Caco-2 (cell line): ENCODE measurements at regions of chr13 and their contacts with region 1.

Region 1: GRCh38 chr13:40922437-40923040 is 96.6 kb downstream of the ELF1 start:
- DNase-seq: peak; percentile 80 to 87
- H3K4me3 ChIP-seq: peak overlapping the region; percentile 76
- H3K4me3 Mint-ChIP-seq: peak overlapping the region; percentile 99
- H3K27ac Mint-ChIP-seq: peak overlapping the region; percentile 95
- H3K4me1 ChIP-seq: peaks cover 9% of the 10 kb centered on the region; the same call in 1 of the 2 replicates
- H3K4me1 Mint-ChIP-seq: peaks cover 15% of the 10 kb centered on the region
- H3K27me3 ChIP-seq: no peaks in the 10 kb centered on the region
- H3K27me3 Mint-ChIP-seq: no peaks in the 10 kb centered on the region
- CTCF ChIP-seq: no peak

Region 2: DNA sequence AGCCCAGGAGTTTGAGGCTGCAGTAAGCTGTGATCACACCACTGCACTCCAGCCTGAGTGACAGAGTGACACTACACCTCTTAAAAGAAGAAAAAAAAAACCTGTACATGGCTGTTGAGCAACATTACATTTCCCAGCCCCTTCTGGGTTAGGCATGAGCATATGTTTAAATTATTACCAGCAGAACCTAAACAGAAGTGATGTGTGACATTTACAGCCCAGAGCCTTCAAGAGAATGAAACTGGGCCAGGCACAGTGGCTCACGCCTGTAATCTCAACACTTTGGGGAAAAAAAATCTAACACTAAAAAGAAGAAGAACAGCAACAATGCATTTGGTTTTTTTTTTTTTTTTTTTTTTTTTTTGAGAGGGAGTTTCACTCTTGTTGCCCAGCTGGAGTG is 189.9 kb before region 1 on chr13:
- CTCF ChIA-PET with region 1: no interaction called
- POLR2A ChIA-PET with region 1: no interaction called
- intact Hi-C with region 1: no loop called
- DNase-seq: no peak
- H3K4me3 ChIP-seq: no peak overlapping the region
- H3K4me3 Mint-ChIP-seq: no peak overlapping the region
- H3K27ac Mint-ChIP-seq: no peak overlapping the region
- H3K4me1 ChIP-seq: no peaks in the 10 kb centered on the region
- H3K4me1 Mint-ChIP-seq: no peaks in the 10 kb centered on the region
- H3K27me3 ChIP-seq: no peaks in the 10 kb centered on the region
- H3K27me3 Mint-ChIP-seq: no peaks in the 10 kb centered on the region
- CTCF ChIP-seq: no peak

Region 3: DNA sequence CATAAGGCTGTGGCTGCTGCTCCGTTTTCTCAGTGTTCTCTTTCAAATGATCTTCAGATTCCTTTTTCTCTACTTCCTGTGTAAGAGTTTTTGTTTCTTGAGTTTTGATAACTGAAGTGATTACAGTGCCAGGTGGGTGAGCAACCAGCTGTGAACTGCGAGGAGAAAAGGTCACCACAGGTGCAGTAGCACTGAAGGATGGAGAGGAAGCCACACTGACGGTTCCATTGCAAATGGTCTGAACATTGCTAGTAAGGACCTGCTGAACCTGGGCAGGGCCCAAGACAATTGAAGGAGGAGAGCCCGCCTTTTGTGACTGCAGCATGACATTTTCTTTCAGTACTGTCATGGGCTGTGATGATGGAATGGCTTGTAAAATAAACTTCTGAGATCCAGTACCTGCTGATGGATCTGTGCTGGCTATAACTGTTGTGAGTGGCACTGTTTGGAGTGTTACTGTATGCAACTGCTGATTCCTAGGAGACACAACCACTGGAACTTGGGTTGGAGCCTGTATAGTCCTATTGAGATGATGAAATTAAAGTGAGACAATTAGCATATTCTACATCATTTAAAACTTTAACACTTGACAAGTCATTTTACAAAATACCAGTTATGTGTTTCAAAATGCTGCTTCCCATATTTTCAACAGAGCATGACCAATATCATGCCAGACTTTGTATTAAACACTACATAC is 11.1 kb after region 1 on chr13:
- CTCF ChIA-PET with region 1: interaction called, 4 read pairs
- POLR2A ChIA-PET with region 1: interaction called, 11 read pairs
- intact Hi-C with region 1: no loop called
- DNase-seq: no peak
- H3K4me3 ChIP-seq: no peak overlapping the region
- H3K4me3 Mint-ChIP-seq: no peak overlapping the region
- H3K27ac Mint-ChIP-seq: no peak overlapping the region
- H3K4me1 ChIP-seq: no peaks in the 10 kb centered on the region
- H3K4me1 Mint-ChIP-seq: no peaks in the 10 kb centered on the region
- H3K27me3 ChIP-seq: no peaks in the 10 kb centered on the region
- H3K27me3 Mint-ChIP-seq: no peaks in the 10 kb centered on the region
- CTCF ChIP-seq: no peak

Region 4: GRCh38 chr13:41019011-41019487 is 96.5 kb after region 1 on chr13 and contains the start of gene ELF1:
- CTCF ChIA-PET with region 1: interaction called, 3 read pairs
- POLR2A ChIA-PET with region 1: interaction called, 6 read pairs
- intact Hi-C with region 1: loop called (anchors 5 kb)
- DNase-seq: peak; percentile 70 to 71
- H3K4me3 ChIP-seq: peak within 1 kb of the TSS; percentile 26
- H3K4me3 Mint-ChIP-seq: peak within 1 kb of the TSS; percentile 75
- H3K27ac Mint-ChIP-seq: peak within 1 kb of the TSS; percentile 88
- H3K4me1 ChIP-seq: peaks cover 57% of the 10 kb centered on the region
- H3K4me1 Mint-ChIP-seq: peaks cover 53% of the 10 kb centered on the region
- H3K27me3 ChIP-seq: no peaks in the 10 kb centered on the region
- H3K27me3 Mint-ChIP-seq: no peaks in the 10 kb centered on the region
- CTCF ChIP-seq: no peak
- total RNA-seq, gene ELF1: 108 and 116 TPM in 2 replicates

Region 5: GRCh38 chr13:41061075-41061913 is 138.8 kb after region 1 on chr13 and contains the start of gene WBP4:
- CTCF ChIA-PET with region 1: no interaction called
- POLR2A ChIA-PET with region 1: interaction called, 11 read pairs
- intact Hi-C with region 1: no loop called
- DNase-seq: peak; percentile 97 to 99
- H3K4me3 ChIP-seq: peak within 1 kb of the TSS; percentile 76
- H3K4me3 Mint-ChIP-seq: peak within 1 kb of the TSS; percentile 95
- H3K27ac Mint-ChIP-seq: peak within 1 kb of the TSS; percentile 99
- H3K4me1 ChIP-seq: peaks cover 56% of the 10 kb centered on the region
- H3K4me1 Mint-ChIP-seq: peaks cover 43% of the 10 kb centered on the region
- H3K27me3 ChIP-seq: no peaks in the 10 kb centered on the region
- H3K27me3 Mint-ChIP-seq: no peaks in the 10 kb centered on the region
- CTCF ChIP-seq: no peak
- total RNA-seq, gene WBP4: 12.9 and 13.6 TPM in 2 replicates